Activated CD4-positive, alpha-beta T cell treated with anti-CD3 and anti-CD28 coated beads for 36 hours (primary cell): ENCODE measurements at regions of chr1 and their contacts with region 1.

Region 1: GRCh38 chr1:17011439-17012307 is at the start of gene ATP13A2:
- DNase-seq: peak; percentile 90
- ATAC-seq: peak; percentile 99
- H3K4me3 Mint-ChIP-seq: peak within 1 kb of the TSS; percentile 79
- H3K27ac Mint-ChIP-seq: peak within 1 kb of the TSS; percentile 55
- H3K4me1 Mint-ChIP-seq: peaks cover 20% of the 10 kb centered on the region
- H3K27me3 Mint-ChIP-seq: no peaks in the 10 kb centered on the region
- total RNA-seq, gene ATP13A2: 30.7 to 32.0 TPM

Region 2: DNA sequence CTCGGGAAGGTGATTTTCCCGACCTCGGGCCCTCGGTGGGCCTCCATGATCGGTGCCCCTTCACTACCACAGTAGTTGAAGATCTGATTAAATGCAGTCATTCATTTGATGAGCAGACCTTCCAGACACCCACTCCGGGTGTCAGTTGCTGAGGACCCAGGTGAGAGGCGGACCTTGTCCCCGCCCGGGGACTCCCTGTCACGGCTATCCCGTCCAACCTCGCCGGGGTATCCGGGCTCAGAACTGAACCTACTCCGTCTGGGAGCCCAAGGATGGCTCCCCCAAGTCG is 367.5 kb before region 1 on chr1:
- CTCF ChIA-PET with region 1: no interaction called
- POLR2A ChIA-PET with region 1: no interaction called
- intact Hi-C with region 1: loop called in 1 of 2 experiments (anchors 1 kb)
- DNase-seq: no peak
- ATAC-seq: peak; percentile 47
- H3K4me3 Mint-ChIP-seq: no peak overlapping the region
- H3K27ac Mint-ChIP-seq: no peak overlapping the region
- H3K4me1 Mint-ChIP-seq: peaks cover 3% of the 10 kb centered on the region
- H3K27me3 Mint-ChIP-seq: no peaks in the 10 kb centered on the region

Region 3: DNA sequence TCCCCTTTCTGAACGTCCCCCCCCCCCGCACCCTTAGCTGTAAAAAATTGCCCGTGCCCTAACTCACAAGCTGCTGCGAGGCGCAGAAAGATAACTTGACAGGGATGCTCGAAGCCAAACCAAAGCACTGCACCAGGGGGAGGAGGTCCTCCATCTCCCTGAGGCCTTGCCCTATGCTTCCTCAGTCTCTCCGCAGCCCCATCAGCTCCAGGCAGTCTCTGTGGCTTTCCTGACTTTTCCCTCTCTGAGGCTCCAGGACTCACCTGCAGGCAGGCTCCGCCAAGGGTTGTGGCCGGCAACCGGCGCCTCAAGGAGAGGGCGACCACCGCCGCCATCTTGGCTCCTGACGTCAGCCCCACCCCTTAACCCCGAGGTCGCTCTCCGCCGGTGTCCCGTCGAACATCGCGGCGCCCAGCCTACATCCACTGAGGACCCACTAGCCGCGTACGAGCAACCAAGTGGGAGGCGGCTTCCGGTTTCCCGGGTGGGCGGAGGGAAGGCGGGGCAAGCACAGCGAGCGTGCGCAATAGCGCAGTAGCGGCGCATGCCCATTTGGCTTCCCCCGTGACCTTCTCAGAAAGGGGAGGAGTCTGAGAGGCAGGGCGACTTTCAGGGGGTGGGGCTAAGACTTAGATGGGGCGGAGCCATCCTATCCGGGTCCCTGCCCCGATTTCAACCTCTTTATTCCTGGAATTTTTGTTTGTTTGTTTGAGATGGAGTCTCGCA is 42.2 kb after region 1 on chr1 and contains the start of gene SDHB:
- CTCF ChIA-PET with region 1: no interaction called
- POLR2A ChIA-PET with region 1: interaction called, 3 read pairs
- intact Hi-C with region 1: loop called (anchors 1 kb)
- DNase-seq: peak; percentile 100
- ATAC-seq: peak; percentile 99
- H3K4me3 Mint-ChIP-seq: peak within 1 kb of the TSS; percentile 94
- H3K27ac Mint-ChIP-seq: peak within 1 kb of the TSS; percentile 97
- H3K4me1 Mint-ChIP-seq: peaks cover 21% of the 10 kb centered on the region
- H3K27me3 Mint-ChIP-seq: peaks cover 3% of the 10 kb centered on the region
- total RNA-seq, gene SDHB: 132 to 149 TPM

Region 4: GRCh38 chr1:17066361-17067068 is 54.8 kb after region 1 on chr1:
- CTCF ChIA-PET with region 1: no interaction called
- POLR2A ChIA-PET with region 1: no interaction called
- intact Hi-C with region 1: no loop called
- DNase-seq: no peak
- ATAC-seq: no peak
- H3K4me3 Mint-ChIP-seq: no peak overlapping the region
- H3K27ac Mint-ChIP-seq: no peak overlapping the region
- H3K4me1 Mint-ChIP-seq: no peaks in the 10 kb centered on the region
- H3K27me3 Mint-ChIP-seq: no peaks in the 10 kb centered on the region